Activated CD8-positive, alpha-beta memory T cell treated with anti-CD3 and anti-CD28 coated beads, Interleukin-2, amount 10 ng/mL, durations not matched to agents 7 days and 5 days (primary cell): ENCODE measurements at regions of chr20 and their contacts with region 1.

Region 1: GRCh38 chr20:21235484-21236445 is 67.4 kb upstream of the XRN2 start:
- DNase-seq: peak; percentile 74
- ATAC-seq: peak; percentile 73
- H3K4me3 Mint-ChIP-seq: no peak overlapping the region
- H3K27ac Mint-ChIP-seq: no peak overlapping the region
- H3K4me1 Mint-ChIP-seq: peaks cover 2% of the 10 kb centered on the region
- H3K27me3 Mint-ChIP-seq: no peaks in the 10 kb centered on the region

Region 2: GRCh38 chr20:21102603-21103311 is 133.0 kb before region 1 on chr20:
- CTCF ChIA-PET with region 1: interaction called, 10 read pairs
- DNase-seq: peak; percentile 68
- ATAC-seq: peak; percentile 72
- H3K4me3 Mint-ChIP-seq: peak overlapping the region; percentile 72
- H3K27ac Mint-ChIP-seq: peak overlapping the region; percentile 65
- H3K4me1 Mint-ChIP-seq: peaks cover 42% of the 10 kb centered on the region
- H3K27me3 Mint-ChIP-seq: peaks cover 82% of the 10 kb centered on the region

Region 3: GRCh38 chr20:21166801-21167200 is 69.0 kb before region 1 on chr20:
- CTCF ChIA-PET with region 1: interaction called, 11 read pairs
- DNase-seq: peak; percentile 86
- ATAC-seq: peak; percentile 90
- H3K4me3 Mint-ChIP-seq: peak overlapping the region; percentile 41
- H3K27ac Mint-ChIP-seq: peak overlapping the region; percentile 93
- H3K4me1 Mint-ChIP-seq: peaks cover 24% of the 10 kb centered on the region
- H3K27me3 Mint-ChIP-seq: no peaks in the 10 kb centered on the region

Region 4: DNA sequence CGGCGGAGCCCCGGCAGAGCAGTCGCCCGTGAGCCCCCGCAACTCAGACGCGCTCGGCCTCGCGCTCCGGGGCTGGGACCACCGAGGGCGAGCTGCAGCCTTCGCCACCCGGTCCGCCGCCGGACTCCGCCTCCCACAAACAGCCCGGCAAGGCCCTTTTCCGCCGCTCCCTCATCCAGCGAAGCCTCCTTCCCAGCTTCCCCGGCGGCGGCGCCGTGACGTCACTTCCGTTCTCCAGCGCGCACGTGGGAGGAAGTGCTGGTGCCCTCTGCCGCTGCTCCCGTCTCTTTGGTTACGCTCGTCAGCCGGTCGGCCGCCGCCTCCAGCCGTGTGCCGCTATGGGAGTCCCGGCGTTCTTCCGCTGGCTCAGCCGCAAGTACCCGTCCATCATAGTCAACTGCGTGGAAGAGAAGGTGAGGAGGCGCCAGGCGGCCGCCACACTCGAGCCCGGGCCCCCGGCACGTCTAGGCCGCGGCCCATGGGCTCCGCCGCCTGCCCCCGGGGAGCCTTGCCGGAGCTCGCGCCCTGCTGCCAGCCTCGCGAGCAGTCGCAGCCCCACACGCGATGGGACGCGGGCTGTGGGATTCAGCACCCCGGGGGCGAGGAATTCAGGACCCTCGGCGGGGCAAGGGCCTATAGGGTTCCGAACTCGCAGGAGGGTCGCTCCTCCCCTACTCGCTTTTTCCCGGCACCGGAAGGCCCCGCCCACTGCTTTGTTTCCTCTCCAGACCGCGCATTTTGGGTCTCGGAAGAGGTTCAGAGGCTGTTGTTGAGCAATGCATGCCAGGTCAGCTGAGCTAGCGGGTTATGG is 67.5 kb after region 1 on chr20 and contains the start of gene XRN2:
- CTCF ChIA-PET with region 1: interaction called, 12 read pairs
- DNase-seq: peak; percentile 95
- ATAC-seq: peak; percentile 91
- H3K4me3 Mint-ChIP-seq: peak within 1 kb of the TSS; percentile 92
- H3K27ac Mint-ChIP-seq: peak within 1 kb of the TSS; percentile 98
- H3K4me1 Mint-ChIP-seq: peaks cover 29% of the 10 kb centered on the region
- H3K27me3 Mint-ChIP-seq: no peaks in the 10 kb centered on the region
- total RNA-seq, gene XRN2: 52.5 to 69.9 TPM

Region 5: DNA sequence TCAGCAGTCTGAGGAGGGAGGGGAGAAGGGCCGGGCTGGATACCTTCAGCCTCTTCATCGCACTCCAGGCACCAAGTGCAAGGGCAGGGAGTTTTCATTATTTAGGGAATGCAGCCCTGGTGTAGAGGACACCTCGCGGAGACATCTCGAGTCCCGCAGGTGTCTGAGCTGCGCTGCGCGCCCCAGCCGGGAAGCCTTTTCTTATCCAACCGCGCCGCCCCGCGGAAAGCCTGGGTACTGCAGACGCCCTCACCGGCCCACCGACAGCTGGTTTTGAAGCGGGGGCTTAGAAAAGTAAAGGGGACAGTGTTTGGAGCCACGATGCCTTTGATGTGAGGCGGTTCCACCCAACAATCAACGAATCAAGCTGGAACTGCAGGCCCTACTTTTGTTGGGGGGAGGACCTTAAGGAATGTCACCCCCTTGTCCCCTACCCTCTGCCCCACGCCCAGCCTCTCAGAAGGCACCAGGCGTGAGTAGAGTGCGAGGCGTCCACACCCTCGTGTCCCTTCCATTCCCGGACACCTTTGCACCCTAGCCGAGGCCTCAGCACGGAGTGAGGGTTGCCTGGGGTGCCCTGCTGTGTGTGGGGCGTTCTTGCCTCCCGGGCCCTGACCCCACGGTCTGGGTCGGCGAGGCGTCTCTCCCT is 269.5 kb after region 1 on chr20:
- CTCF ChIA-PET with region 1: interaction called, 195 read pairs
- DNase-seq: peak; percentile 78
- ATAC-seq: peak; percentile 55
- H3K4me3 Mint-ChIP-seq: no peak overlapping the region
- H3K27ac Mint-ChIP-seq: no peak overlapping the region
- H3K4me1 Mint-ChIP-seq: peaks cover 28% of the 10 kb centered on the region
- H3K27me3 Mint-ChIP-seq: peaks cover 64% of the 10 kb centered on the region